MCF 10A (cell line): ENCODE measurements at regions of chr12 and their contacts with region 1.

Region 1: DNA sequence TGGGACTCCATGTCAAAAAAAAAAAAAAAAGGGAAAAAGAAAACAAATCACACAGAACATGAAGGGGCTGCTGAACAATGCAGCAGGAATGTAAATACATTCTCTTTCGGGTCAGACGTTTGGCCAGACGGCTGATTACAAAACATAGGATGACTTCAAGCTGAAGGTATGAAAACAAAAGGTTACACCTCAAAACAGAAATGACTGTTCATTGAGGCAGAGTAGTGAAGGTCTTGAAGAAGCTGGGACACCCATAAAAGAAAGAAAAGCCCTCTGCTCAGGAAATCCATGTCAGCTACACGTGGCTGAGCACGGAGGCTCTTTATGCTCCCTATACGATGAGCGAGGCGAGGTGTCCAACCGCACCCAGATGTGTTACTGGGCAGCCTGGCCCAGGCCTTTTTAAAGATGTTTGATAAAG is 37.7 kb downstream of the FGD4 start:
- DNase-seq: peak; percentile 91
- H3K4me3 Mint-ChIP-seq: peak overlapping the region; percentile 38
- H3K27ac Mint-ChIP-seq: peak overlapping the region; percentile 93
- H3K4me1 Mint-ChIP-seq: peaks cover 63% of the 10 kb centered on the region
- H3K27me3 Mint-ChIP-seq: no peaks in the 10 kb centered on the region
- CTCF ChIP-seq: no peak

Region 2: GRCh38 chr12:32448586-32448985 is 11.5 kb after region 1 on chr12:
- CTCF ChIA-PET with region 1: interaction called, 6 read pairs
- POLR2A ChIA-PET with region 1: interaction called, 16 read pairs
- intact Hi-C with region 1: no loop called
- DNase-seq: peak; percentile 55
- H3K4me3 Mint-ChIP-seq: peak overlapping the region; percentile 6
- H3K27ac Mint-ChIP-seq: peak overlapping the region; percentile 77
- H3K4me1 Mint-ChIP-seq: peaks cover 63% of the 10 kb centered on the region
- H3K27me3 Mint-ChIP-seq: no peaks in the 10 kb centered on the region
- CTCF ChIP-seq: no peak

Region 3: GRCh38 chr12:32476446-32476845 is 39.3 kb after region 1 on chr12:
- CTCF ChIA-PET with region 1: no interaction called
- POLR2A ChIA-PET with region 1: no interaction called
- intact Hi-C with region 1: no loop called
- DNase-seq: no peak
- H3K4me3 Mint-ChIP-seq: no peak overlapping the region
- H3K27ac Mint-ChIP-seq: no peak overlapping the region
- H3K4me1 Mint-ChIP-seq: peaks cover under 1% of the 10 kb centered on the region
- H3K27me3 Mint-ChIP-seq: no peaks in the 10 kb centered on the region
- CTCF ChIP-seq: no peak

Region 4: DNA sequence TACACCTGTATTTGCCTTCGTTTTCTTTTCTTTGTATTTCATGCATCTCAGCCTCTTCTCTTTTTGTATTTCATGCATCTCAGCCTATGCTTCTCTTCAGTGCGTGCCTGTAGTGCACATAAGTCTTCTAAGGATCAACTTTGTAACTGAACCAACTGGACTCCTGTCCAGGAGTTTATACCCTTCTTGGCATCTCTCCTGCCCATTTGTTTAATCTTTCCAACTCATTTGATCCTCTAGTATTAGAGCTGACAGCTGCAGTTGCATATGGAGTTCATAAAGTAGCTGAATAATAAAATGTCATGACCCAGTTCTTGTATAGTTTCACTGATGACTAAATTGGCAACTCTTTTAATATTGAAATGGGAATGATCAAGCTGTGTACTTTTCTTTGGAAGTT is 52.0 kb after region 1 on chr12:
- CTCF ChIA-PET with region 1: no interaction called
- POLR2A ChIA-PET with region 1: no interaction called
- intact Hi-C with region 1: no loop called
- DNase-seq: no peak
- H3K4me3 Mint-ChIP-seq: no peak overlapping the region
- H3K27ac Mint-ChIP-seq: no peak overlapping the region
- H3K4me1 Mint-ChIP-seq: peaks cover 11% of the 10 kb centered on the region
- H3K27me3 Mint-ChIP-seq: no peaks in the 10 kb centered on the region
- CTCF ChIP-seq: no peak